ENCODE measurements at regions of chr4 and their contacts with region 1.

Region 1: GRCh38 chr4:78951862-78952472 is 12.7 kb upstream of the PAQR3 start:
- DNase-seq: no peak

Region 2: DNA sequence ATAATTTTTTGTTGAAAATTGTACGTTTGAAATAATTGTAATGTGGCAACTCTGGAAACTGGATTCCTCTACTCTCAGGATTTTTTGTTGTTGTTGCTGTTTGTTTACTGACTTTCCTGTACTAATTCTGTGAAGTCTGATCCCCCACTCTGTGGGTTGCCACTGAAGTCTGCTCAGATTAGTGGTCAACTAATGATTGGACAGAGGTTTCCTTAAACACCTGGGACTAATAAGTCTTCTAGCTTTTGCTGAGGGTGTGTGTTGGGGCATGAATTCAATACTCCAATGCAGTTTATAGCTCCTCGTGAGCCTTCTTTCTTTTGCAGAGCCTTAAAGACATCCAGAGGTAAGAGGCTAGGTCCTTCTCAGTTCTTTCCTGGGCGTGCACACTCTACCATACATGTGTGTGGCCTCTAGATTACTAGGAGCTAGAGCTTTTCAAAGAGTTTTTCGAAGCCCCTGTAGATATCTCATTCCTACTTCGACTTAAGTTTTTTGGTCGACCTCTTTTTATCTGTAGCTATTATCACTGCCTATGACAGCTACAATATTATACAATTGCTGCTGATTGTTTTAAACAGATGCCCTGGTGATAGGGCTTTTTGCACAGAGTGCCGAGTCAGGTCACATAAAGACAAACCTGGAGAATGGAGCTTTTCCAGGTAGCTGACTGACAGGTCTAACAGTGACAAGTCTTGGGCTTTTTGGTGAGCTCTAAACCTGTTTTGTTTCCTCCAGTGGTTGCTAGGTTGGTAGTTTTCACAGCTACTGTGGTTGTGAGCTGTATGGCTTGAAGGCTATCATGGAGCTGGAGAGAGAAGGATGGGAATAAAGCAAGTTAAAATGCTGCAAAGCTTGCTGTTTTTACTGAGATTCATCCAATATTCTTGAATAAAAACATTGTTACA is 141.8 kb before region 1 on chr4:
- intact Hi-C with region 1: no loop called
- DNase-seq: no peak

Region 3: GRCh38 chr4:79413032-79413885 is 461.3 kb after region 1 on chr4:
- intact Hi-C with region 1: no loop called
- DNase-seq: no peak

Region 4: DNA sequence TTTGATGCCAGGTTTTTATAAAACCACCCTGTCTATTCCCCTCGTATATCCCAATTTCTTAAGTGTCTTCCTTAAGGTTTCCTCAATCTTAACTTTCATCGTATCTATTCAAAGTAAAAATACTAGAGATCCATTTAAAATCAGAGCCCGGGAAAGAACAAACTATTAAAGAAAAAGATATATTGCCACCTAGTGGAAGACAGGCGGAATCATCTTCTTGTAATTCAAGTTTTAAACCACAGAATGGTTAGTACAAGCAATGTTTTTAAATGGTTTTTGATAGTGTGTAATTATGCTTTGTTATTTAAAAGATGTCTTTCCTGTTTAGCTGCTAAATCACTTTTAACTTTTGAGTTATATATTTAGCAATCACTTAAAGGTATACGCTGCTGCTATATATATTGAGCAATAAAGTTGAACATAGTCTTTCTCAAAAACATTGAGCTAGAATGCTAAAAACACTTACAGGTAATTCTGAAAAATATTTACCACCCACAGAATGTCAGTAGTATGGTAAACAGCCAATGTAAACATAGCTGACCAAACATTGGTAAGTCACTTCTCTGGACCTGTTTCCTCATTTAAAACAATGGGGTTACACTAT is 1263.6 kb after region 1 on chr4:
- intact Hi-C with region 1: loop called (anchors 2 kb)
- DNase-seq: no peak

Region 5: DNA sequence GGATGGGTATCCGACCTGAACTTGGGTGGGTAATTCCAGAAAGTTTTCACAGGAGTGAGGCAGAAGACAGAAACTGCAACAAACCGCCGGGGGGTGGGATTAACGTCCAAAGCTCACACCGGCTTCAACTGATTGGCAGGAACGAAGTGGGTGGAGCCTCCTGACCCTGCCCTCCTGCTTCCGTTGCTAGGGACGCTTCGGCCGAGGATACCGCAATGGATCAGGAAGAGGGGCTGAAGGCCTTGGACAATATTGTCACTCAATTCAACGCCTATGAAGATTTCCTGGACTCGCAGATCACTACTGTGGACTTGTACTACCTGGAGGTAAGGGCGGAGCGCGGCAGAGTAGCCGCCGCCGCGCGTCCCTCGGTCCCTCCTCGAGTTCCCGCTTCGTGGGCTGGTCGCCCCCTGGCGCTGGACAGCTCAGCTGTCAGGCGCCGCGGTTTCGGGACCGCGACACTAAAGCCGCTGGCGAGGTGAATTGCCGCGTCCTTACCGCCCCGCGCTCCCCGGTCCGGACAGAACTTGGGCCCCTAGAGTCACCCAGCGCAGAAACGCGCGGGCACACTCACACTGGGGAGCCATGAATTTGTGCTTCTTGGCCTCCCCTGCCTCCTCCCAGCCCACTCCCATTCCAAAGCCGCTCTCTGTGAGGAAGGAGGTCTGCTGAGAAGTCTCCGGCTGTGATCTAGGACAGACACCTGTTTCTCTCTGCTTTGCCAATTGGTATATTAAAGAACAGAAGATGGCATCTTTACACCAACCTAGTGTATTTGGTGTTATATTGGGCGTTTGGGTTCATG is 1383.8 kb after region 1 on chr4 and contains the start of gene CFAP299:
- intact Hi-C with region 1: loop called (anchors 10 kb)
- DNase-seq: peak; percentile 82
- total RNA-seq, gene CFAP299: not detected

Measured in cardiac septum (tissue), 1 donor.